HEK293T (cell line): ENCODE measurements at regions of chr12 and their contacts with region 1.

Region 1: GRCh38 chr12:5745265-5745888 is 199.7 kb downstream of the ANO2 start:
- DNase-seq: peak; percentile 80

Region 2: GRCh38 chr12:5789469-5789968 is 44.1 kb after region 1 on chr12:
- CTCF ChIA-PET with region 1: interaction called, 13 read pairs
- POLR2A ChIA-PET with region 1: no interaction called
- DNase-seq: no peak